SK-N-SH (cell line): ENCODE measurements at regions of chr2 and their contacts with region 1.

Region 1: GRCh38 chr2:218979846-218980734 is 4.9 kb downstream of the FEV start:
- DNase-seq: peak; percentile 88
- H3K4me3 ChIP-seq: peak overlapping the region; percentile 45 to 75
- H3K27ac ChIP-seq: peak overlapping the region in 1 of 2 experiments; percentile 69; a peak in 2 of 4 replicates
- H3K4me1 ChIP-seq: peaks cover 0 to 28% of the 10 kb centered on the region in 2 experiments; a peak in 1 of 4 replicates
- H3K27me3 ChIP-seq: peaks cover 28% of the 10 kb centered on the region
- CTCF ChIP-seq: peak; percentile 98
- EP300 ChIP-seq: no peak
- RAD21 ChIP-seq: peak; percentile 80

Region 2: GRCh38 chr2:218852911-218853667 is 127.0 kb before region 1 on chr2:
- CTCF ChIA-PET with region 1: interaction called, 26 read pairs
- POLR2A ChIA-PET with region 1: no interaction called
- DNase-seq: peak; percentile 74
- H3K4me3 ChIP-seq: no peak overlapping the region; a peak in 1 of 4 replicates
- H3K27ac ChIP-seq: no peak overlapping the region
- H3K4me1 ChIP-seq: peaks cover 3 to 43% of the 10 kb centered on the region in 2 experiments; a peak in 2 of 4 replicates
- H3K27me3 ChIP-seq: peaks cover 9% of the 10 kb centered on the region; the same call in 1 of the 2 replicates
- CTCF ChIP-seq: peak; percentile 81
- EP300 ChIP-seq: no peak
- RAD21 ChIP-seq: peak; percentile 95

Region 3: GRCh38 chr2:218898109-218898878 is 81.8 kb before region 1 on chr2:
- CTCF ChIA-PET with region 1: interaction called, 43 read pairs
- POLR2A ChIA-PET with region 1: no interaction called
- DNase-seq: peak; percentile 94
- H3K4me3 ChIP-seq: peak overlapping the region; percentile 25 to 33; a peak in 2 of 4 replicates
- H3K27ac ChIP-seq: no peak overlapping the region
- H3K4me1 ChIP-seq: peaks cover 0 to 25% of the 10 kb centered on the region in 2 experiments; a peak in 1 of 4 replicates
- H3K27me3 ChIP-seq: peaks cover 46% of the 10 kb centered on the region
- CTCF ChIP-seq: peak; percentile 92
- EP300 ChIP-seq: no peak
- RAD21 ChIP-seq: peak; percentile 81

Region 4: DNA sequence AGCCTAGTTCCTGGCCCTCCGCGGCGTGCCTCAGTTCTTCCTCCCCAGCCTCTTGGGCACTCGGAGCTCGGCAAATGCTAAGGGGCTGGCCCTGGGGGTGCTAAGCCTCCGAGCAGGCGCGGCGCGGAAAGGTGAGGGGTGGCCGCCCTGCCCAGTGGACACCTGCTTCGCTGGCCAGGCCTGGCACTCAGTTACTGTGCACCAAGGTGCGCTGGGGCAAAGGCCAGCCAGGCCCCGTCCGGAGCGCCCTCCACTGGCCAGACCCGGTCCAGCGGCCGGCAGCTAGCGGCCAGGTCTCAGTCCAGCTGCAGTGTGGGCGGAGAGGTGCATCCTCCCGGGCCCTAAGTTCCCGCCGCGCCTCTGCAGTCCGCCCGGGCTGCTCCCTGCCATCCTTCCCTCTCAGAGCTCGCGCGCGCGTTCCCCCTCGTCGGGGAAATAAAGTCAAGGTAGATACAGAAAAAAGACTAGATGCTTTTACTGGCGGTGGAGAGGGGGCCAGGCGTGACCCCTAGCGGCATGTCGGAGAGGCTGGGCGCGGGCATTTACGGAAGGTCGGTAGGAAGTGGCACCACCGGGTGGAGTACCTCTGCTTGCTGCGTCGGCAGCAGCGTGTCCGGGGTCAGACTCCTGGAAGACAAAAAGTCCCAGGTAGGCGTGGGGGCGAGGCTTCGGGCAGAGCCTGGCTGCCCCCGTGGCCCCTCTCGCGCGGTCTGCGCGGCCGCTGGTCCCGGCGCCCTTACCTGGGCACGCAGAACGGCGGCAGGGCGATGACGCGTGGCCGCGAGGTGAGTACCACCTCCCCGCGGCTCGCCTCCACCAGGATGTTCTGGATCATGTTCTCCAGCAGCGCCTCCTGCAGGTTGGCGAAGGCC is 22.5 kb after region 1 on chr2:
- CTCF ChIA-PET with region 1: interaction called, 183 read pairs
- POLR2A ChIA-PET with region 1: interaction called, 89 read pairs
- DNase-seq: peak; percentile 89
- H3K4me3 ChIP-seq: peak overlapping the region; percentile 51 to 54
- H3K27ac ChIP-seq: peak overlapping the region in 1 of 2 experiments; percentile 99; a peak in 2 of 4 replicates
- H3K4me1 ChIP-seq: peaks cover 0 to 60% of the 10 kb centered on the region in 2 experiments; a peak in 2 of 4 replicates
- H3K27me3 ChIP-seq: peaks cover 18% of the 10 kb centered on the region; the same call in 1 of the 2 replicates
- CTCF ChIP-seq: peak; percentile 35; the same call in 1 of the 2 replicates
- EP300 ChIP-seq: no peak
- RAD21 ChIP-seq: peak; percentile 66

Region 5: DNA sequence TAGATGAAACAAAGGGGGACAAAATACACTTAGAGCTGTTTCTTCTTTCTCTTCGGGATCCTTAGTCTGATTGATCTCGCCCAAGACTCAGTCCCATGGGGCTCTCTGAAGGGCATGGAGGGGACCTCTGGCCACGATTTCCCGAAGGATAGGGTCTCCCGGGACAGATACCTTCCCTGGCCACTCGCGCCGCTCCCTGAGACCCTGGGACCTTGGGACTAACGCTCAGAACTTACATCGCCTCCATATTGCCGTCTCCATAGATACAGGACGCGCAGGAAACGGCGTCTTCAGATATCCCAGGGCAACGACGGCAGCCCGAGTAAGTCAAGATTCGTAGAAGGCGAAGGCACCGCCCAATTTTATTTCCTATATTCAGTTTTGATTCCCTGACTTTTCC is 61.2 kb after region 1 on chr2 and contains the start of gene CFAP65:
- CTCF ChIA-PET with region 1: interaction called, 10 read pairs
- POLR2A ChIA-PET with region 1: no interaction called
- DNase-seq: peak; percentile 84
- H3K4me3 ChIP-seq: peak within 1 kb of the TSS; percentile 74 to 78
- H3K27ac ChIP-seq: no peak within 1 kb of the TSS
- H3K4me1 ChIP-seq: peaks cover 4 to 6% of the 10 kb centered on the region in 2 experiments; a peak in 1 of 4 replicates
- H3K27me3 ChIP-seq: no peaks in the 10 kb centered on the region
- CTCF ChIP-seq: no peak
- EP300 ChIP-seq: 0 out of 4 replicates have a peak, but pooled peaks of 1 of the 2 experiments have one; percentile 19
- RAD21 ChIP-seq: no peak
- polyA plus RNA-seq, gene CFAP65: 0.95 and 1.7 TPM in 2 replicates

Region 6: GRCh38 chr2:219160186-219161017 is 180.3 kb after region 1 on chr2 and contains the start of gene NHEJ1:
- CTCF ChIA-PET with region 1: interaction called, 31 read pairs
- POLR2A ChIA-PET with region 1: no interaction called
- DNase-seq: peak; percentile 98
- H3K4me3 ChIP-seq: peak within 1 kb of the TSS; percentile 69 to 75
- H3K27ac ChIP-seq: peak within 1 kb of the TSS; percentile 90 to 99
- H3K4me1 ChIP-seq: peaks cover 0 to 11% of the 10 kb centered on the region in 2 experiments; a peak in 1 of 4 replicates
- H3K27me3 ChIP-seq: no peaks in the 10 kb centered on the region
- CTCF ChIP-seq: peak; percentile 96
- EP300 ChIP-seq: no peak
- RAD21 ChIP-seq: peak; percentile 81
- polyA plus RNA-seq, gene NHEJ1: 16.3 and 21.0 TPM in 2 replicates